B cell (primary cell): ENCODE measurements at regions of chr1 and their contacts with region 1.

Region 1: GRCh38 chr1:45803301-45803780 is at the start of gene MAST2:
- DNase-seq: peak; percentile 92
- ATAC-seq: peak; percentile 97
- H3K4me3 ChIP-seq: peak within 1 kb of the TSS; percentile 31 to 64 (median 52)
- H3K4me3 Mint-ChIP-seq: peak within 1 kb of the TSS; percentile 98
- H3K27ac ChIP-seq: no peak within 1 kb of the TSS
- H3K27ac Mint-ChIP-seq: peak within 1 kb of the TSS; percentile 71
- H3K4me1 ChIP-seq: peaks cover 11 to 15% of the 10 kb centered on the region in 2 donors
- H3K4me1 Mint-ChIP-seq: peaks cover 27% of the 10 kb centered on the region
- H3K27me3 ChIP-seq: no peaks in the 10 kb centered on the region
- H3K27me3 Mint-ChIP-seq: no peaks in the 10 kb centered on the region
- CTCF ChIP-seq: no peak
- total RNA-seq, gene MAST2: 23.3 and 26.4 TPM in 2 replicates

Region 2: GRCh38 chr1:45326627-45327623 is 476.4 kb before region 1 on chr1 and contains the start of gene HPDL:
- CTCF ChIA-PET with region 1: no interaction called
- POLR2A ChIA-PET with region 1: no interaction called
- intact Hi-C with region 1: loop called (anchors 5 kb)
- DNase-seq: peak; percentile 74
- ATAC-seq: peak; percentile 88
- H3K4me3 ChIP-seq: peak within 1 kb of the TSS; percentile 47 to 70 (median 63)
- H3K4me3 Mint-ChIP-seq: peak within 1 kb of the TSS; percentile 89
- H3K27ac ChIP-seq: no peak within 1 kb of the TSS
- H3K27ac Mint-ChIP-seq: peak within 1 kb of the TSS; percentile 15
- H3K4me1 ChIP-seq: peaks cover 8 to 20% of the 10 kb centered on the region in 2 donors
- H3K4me1 Mint-ChIP-seq: peaks cover 13% of the 10 kb centered on the region
- H3K27me3 ChIP-seq: peaks cover 0 to 5% (median 2%) of the 10 kb centered on the region in 4 experiments
- H3K27me3 Mint-ChIP-seq: no peaks in the 10 kb centered on the region
- CTCF ChIP-seq: no peak
- total RNA-seq, gene HPDL: 0.79 and 0.85 TPM in 2 replicates

Region 3: GRCh38 chr1:45792744-45793143 is 10.6 kb before region 1 on chr1:
- CTCF ChIA-PET with region 1: no interaction called
- POLR2A ChIA-PET with region 1: no interaction called
- intact Hi-C with region 1: no loop called
- DNase-seq: no peak
- ATAC-seq: no peak
- H3K4me3 ChIP-seq: no peak overlapping the region
- H3K4me3 Mint-ChIP-seq: no peak overlapping the region
- H3K27ac ChIP-seq: no peak overlapping the region
- H3K27ac Mint-ChIP-seq: no peak overlapping the region
- H3K4me1 ChIP-seq: peaks cover 5 to 6% of the 10 kb centered on the region in 2 donors
- H3K4me1 Mint-ChIP-seq: peaks cover 6% of the 10 kb centered on the region
- H3K27me3 ChIP-seq: no peaks in the 10 kb centered on the region
- H3K27me3 Mint-ChIP-seq: peaks cover 16% of the 10 kb centered on the region
- CTCF ChIP-seq: no peak

Region 4: GRCh38 chr1:46379996-46380395 is 576.7 kb after region 1 on chr1:
- CTCF ChIA-PET with region 1: no interaction called
- POLR2A ChIA-PET with region 1: no interaction called
- intact Hi-C with region 1: no loop called
- DNase-seq: no peak
- ATAC-seq: no peak
- H3K4me3 ChIP-seq: no peak overlapping the region
- H3K4me3 Mint-ChIP-seq: no peak overlapping the region
- H3K27ac ChIP-seq: no peak overlapping the region
- H3K27ac Mint-ChIP-seq: no peak overlapping the region
- H3K4me1 ChIP-seq: no peaks in the 10 kb centered on the region
- H3K4me1 Mint-ChIP-seq: no peaks in the 10 kb centered on the region
- H3K27me3 ChIP-seq: no peaks in the 10 kb centered on the region
- H3K27me3 Mint-ChIP-seq: no peaks in the 10 kb centered on the region
- CTCF ChIP-seq: no peak